GM12878 (cell line): ENCODE measurements at regions of chr7 and their contacts with region 1.

Region 1: DNA sequence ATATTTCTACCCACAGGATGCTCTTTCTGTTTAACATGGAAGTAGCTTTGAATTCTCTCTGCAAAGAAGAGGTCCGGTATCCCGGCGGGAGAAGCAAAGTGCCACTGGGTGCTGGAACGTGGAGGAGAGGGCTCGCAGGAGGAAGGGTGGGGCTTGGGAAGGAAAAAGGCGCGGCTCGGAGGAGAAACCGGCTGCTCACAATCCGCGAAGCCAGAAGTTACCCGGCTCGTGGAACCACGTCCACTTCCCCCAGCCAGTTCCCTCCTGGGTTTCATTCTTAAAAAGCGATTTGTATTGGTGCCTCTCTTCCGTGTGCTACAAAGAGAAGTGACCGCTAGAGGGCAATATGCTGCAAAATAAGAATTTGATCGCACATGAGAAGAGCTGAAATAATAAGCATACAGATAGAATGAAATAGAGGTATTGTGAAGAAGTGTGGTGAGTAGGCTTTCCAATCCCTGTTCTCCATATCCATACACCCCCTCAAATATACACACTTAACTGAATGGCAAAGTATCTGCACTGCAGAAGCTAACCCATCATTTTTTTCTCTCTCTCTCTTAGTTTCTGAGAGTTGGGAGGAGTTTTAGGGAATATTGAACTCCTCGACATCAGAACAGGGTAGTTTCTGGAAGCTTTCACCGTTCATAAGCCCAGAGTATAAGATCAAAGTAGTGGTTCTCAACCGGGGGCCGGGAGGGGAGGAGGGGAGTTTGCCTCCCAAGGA is 31.1 kb downstream of the TRIL start:
- DNase-seq: peak; percentile 16
- ATAC-seq: peak; percentile 98
- H3K4me3 ChIP-seq: no peak overlapping the region
- H3K27ac ChIP-seq: no peak overlapping the region
- H3K4me1 ChIP-seq: peaks cover 5% of the 10 kb centered on the region; the same call in 1 of the 2 replicates
- H3K27me3 ChIP-seq: peaks cover 0 to 1% of the 10 kb centered on the region in 2 experiments; a peak in 1 of 4 replicates
- CTCF ChIP-seq: peak; percentile 66 to 83 (median 78)
- EP300 ChIP-seq: no peak
- POLR2A ChIP-seq: no peak
- RAD21 ChIP-seq: peak; percentile 67

Region 2: DNA sequence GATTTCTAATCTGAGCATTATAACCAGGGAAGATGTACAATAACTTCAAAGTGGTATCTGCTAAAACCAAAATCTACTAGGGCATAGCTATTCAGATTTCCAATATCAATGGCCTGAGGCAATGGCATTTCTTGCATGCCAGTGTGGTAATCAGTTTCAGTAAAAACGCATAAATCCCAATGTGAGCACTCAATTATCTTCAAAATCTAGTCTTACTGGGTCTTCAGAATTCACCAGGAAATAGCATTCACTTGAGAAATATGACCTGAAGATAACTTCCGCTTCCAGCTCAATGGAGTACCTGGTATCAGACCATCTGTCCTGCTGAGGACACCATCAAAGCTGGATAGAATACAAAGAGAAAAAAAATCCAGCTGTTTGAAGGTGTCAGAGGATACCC is 41.3 kb before region 1 on chr7:
- CTCF ChIA-PET with region 1: interaction called, 13 read pairs
- POLR2A ChIA-PET with region 1: no interaction called
- RAD21 ChIA-PET with region 1: no interaction called
- SMC1A ChIA-PET with region 1: interaction called, 3 read pairs
- in situ Hi-C with region 1: no loop called
- intact Hi-C with region 1: no loop called
- DNase-seq: no peak
- ATAC-seq: no peak
- H3K4me3 ChIP-seq: no peak overlapping the region
- H3K27ac ChIP-seq: no peak overlapping the region
- H3K4me1 ChIP-seq: no peaks in the 10 kb centered on the region
- H3K27me3 ChIP-seq: peaks cover 0 to 3% of the 10 kb centered on the region in 2 experiments; a peak in 3 of 4 replicates
- CTCF ChIP-seq: no peak
- EP300 ChIP-seq: no peak
- POLR2A ChIP-seq: no peak
- RAD21 ChIP-seq: no peak

Region 3: DNA sequence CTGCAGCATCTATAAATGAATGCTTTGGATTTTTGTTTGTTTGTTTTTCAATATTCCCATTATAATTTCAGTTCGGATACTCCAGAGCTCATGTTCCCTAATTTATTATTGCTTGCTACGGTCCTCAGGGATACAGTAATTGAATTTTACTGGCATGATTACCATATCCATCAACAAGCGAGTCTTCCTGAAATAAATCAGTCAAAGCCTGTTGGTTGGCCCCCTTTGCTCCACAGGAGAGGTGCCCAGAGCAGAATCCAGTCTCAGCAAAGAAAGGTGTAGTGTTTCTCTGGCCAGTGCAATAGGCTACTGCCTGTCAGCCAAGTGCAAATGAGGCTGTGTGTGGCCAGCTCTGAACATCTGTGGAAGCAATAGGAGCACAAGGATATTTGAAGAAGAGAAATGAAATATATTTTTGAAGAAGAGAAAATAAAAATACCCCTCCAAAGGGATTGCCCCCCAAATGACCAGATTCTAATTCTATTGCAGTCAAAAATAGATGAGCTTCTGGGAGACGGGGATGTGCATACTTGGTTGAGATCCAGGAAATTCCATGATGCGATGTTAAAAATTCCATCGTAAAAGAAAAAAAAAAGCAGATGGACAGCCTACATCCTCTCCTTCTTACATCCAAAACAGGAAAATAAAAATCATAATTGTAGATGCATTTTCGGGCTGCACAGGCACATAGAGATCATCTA is 13.0 kb after region 1 on chr7:
- CTCF ChIA-PET with region 1: interaction called, 29 read pairs
- POLR2A ChIA-PET with region 1: no interaction called
- RAD21 ChIA-PET with region 1: interaction called, 3 read pairs
- SMC1A ChIA-PET with region 1: interaction called, 5 read pairs
- in situ Hi-C with region 1: no loop called
- intact Hi-C with region 1: no loop called
- DNase-seq: no peak
- ATAC-seq: no peak
- H3K4me3 ChIP-seq: no peak overlapping the region
- H3K27ac ChIP-seq: no peak overlapping the region
- H3K4me1 ChIP-seq: no peaks in the 10 kb centered on the region
- H3K27me3 ChIP-seq: peaks cover 0 to 7% of the 10 kb centered on the region in 2 experiments; a peak in 3 of 4 replicates
- CTCF ChIP-seq: no peak
- EP300 ChIP-seq: no peak
- POLR2A ChIP-seq: no peak
- RAD21 ChIP-seq: no peak

Region 4: DNA sequence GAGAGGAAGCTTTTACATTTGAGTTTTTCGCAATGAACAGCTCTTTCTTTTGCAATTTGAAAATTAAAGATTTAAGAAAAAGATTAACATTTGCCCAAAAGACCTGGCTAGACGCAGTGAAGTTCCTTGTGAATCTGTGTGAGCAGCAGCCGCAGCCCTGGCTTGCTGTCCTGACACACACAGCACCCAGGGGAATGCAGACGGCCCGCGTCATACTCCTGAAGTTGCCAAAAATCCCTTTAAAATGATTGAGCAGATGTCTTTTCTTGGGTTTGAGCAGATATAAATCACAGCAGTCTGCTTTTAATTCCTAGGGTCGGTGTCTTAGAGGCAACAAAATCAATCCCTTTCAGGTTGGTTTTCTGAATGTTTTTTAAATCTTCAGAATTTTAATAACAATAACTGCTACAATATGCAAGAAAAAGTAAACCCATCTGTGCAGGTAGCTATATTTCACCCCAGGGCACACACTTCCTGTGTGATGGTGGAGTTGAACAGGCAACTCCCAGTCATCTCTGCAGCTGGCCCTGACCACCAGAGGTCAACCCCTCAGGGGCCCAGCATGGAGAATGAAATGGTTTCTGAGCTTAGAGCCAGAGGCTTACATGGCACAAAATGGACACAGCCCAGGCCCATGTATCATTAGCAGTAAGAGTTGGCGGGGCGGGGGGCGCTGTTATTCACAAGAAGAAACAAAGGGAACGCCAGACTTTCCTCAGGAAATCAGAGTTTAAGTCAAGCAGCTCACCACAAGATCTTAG is 63.3 kb after region 1 on chr7:
- CTCF ChIA-PET with region 1: no interaction called
- POLR2A ChIA-PET with region 1: no interaction called
- RAD21 ChIA-PET with region 1: no interaction called
- SMC1A ChIA-PET with region 1: no interaction called
- in situ Hi-C with region 1: no loop called
- intact Hi-C with region 1: no loop called
- DNase-seq: no peak
- ATAC-seq: no peak
- H3K4me3 ChIP-seq: no peak overlapping the region
- H3K27ac ChIP-seq: no peak overlapping the region
- H3K4me1 ChIP-seq: no peaks in the 10 kb centered on the region
- H3K27me3 ChIP-seq: peaks cover 0 to 2% of the 10 kb centered on the region in 2 experiments; a peak in 1 of 4 replicates
- CTCF ChIP-seq: no peak
- EP300 ChIP-seq: no peak
- POLR2A ChIP-seq: no peak
- RAD21 ChIP-seq: no peak

Region 5: GRCh38 chr7:29105752-29106668 is 179.0 kb after region 1 on chr7:
- CTCF ChIA-PET with region 1: interaction called, 375 read pairs
- POLR2A ChIA-PET with region 1: no interaction called
- RAD21 ChIA-PET with region 1: interaction called, 29 read pairs
- SMC1A ChIA-PET with region 1: interaction called, 39 read pairs
- in situ Hi-C with region 1: loop called (anchors 5 kb)
- intact Hi-C with region 1: loop called (anchors 1 kb)
- DNase-seq: no peak
- ATAC-seq: peak; percentile 88
- H3K4me3 ChIP-seq: no peak overlapping the region
- H3K27ac ChIP-seq: no peak overlapping the region
- H3K4me1 ChIP-seq: no peaks in the 10 kb centered on the region
- H3K27me3 ChIP-seq: peaks cover 3% of the 10 kb centered on the region in 2 experiments; a peak in 2 of 4 replicates
- CTCF ChIP-seq: peak; percentile 73 to 80 (median 79)
- EP300 ChIP-seq: no peak
- POLR2A ChIP-seq: no peak
- RAD21 ChIP-seq: peak; percentile 79

Region 6: GRCh38 chr7:29113384-29114103 is 186.5 kb after region 1 on chr7:
- CTCF ChIA-PET with region 1: interaction called, 375 read pairs
- POLR2A ChIA-PET with region 1: no interaction called
- RAD21 ChIA-PET with region 1: no interaction called
- SMC1A ChIA-PET with region 1: interaction called, 10 read pairs
- in situ Hi-C with region 1: loop called (anchors 5 kb)
- intact Hi-C with region 1: no loop called
- DNase-seq: no peak
- ATAC-seq: peak; percentile 50
- H3K4me3 ChIP-seq: no peak overlapping the region
- H3K27ac ChIP-seq: no peak overlapping the region
- H3K4me1 ChIP-seq: no peaks in the 10 kb centered on the region
- H3K27me3 ChIP-seq: peaks cover 1 to 3% of the 10 kb centered on the region in 2 experiments; a peak in 2 of 4 replicates
- CTCF ChIP-seq: peak in 2 of 3 experiments; percentile 27 to 35; a peak in 2 of 6 replicates
- EP300 ChIP-seq: no peak
- POLR2A ChIP-seq: no peak
- RAD21 ChIP-seq: peak; percentile 16; the same call in 1 of the 2 replicates

Region 7: GRCh38 chr7:29609162-29610037 is 682.4 kb after region 1 on chr7:
- CTCF ChIA-PET with region 1: interaction called, 3 read pairs
- POLR2A ChIA-PET with region 1: no interaction called
- RAD21 ChIA-PET with region 1: no interaction called
- SMC1A ChIA-PET with region 1: no interaction called
- in situ Hi-C with region 1: no loop called
- intact Hi-C with region 1: loop called (anchors 10 kb)
- DNase-seq: no peak
- ATAC-seq: 0 out of 3 replicates have a peak, but pooled peaks have one; percentile 53
- H3K4me3 ChIP-seq: no peak overlapping the region
- H3K27ac ChIP-seq: no peak overlapping the region
- H3K4me1 ChIP-seq: no peaks in the 10 kb centered on the region
- H3K27me3 ChIP-seq: peaks cover 0 to 2% of the 10 kb centered on the region in 2 experiments; a peak in 1 of 4 replicates
- CTCF ChIP-seq: peak; percentile 40 to 63 (median 54)
- EP300 ChIP-seq: no peak
- POLR2A ChIP-seq: no peak
- RAD21 ChIP-seq: no peak